ENCODE measurements at regions of chr1 and their contacts with region 1.

Region 1: DNA sequence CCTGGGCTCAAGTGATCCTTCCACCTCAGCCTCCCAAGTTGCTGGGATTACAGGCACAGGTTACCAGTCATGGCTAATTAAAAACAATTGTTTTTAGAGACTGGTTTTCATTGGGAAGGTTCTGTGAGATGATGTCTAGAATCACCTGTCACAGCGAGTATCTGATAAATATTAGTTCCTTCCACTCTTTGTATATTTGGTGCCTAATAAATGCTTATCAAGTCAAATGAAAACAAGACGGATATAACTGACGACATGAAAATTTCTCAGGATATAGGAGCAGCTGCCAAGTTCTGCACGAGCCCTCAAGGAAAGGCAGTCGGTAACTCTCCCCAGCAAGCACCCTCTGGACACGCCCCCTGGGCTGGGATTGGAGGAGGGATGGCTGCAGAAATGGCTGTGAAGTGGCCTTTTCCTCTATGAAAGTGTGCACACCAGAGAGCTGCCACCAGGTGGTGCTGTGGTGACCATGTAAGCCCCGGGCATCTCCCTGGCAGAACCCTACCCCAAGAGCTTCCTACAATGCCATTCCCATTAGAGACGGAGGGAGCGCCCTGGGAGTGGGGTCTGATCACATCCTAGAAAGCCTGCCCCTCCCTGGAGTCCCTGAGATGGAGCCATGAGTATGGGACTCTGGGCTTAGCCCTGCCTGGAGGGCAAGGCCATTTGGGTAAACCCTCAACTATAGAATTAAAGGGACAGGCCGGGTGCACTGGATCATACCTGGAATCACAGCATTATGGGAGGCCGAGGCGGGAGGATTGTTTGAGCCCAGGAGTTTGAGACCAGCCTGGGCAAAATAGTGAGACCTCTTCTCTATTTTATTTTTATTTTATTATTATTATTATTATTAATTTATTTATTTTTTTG is 50.9 kb downstream of the HTR6 start:
- DNase-seq: peak; percentile 93
- H3K4me3 Mint-ChIP-seq: no peak overlapping the region
- H3K27ac Mint-ChIP-seq: no peak overlapping the region
- H3K4me1 Mint-ChIP-seq: peaks cover 28% of the 10 kb centered on the region
- H3K27me3 Mint-ChIP-seq: no peaks in the 10 kb centered on the region

Region 2: DNA sequence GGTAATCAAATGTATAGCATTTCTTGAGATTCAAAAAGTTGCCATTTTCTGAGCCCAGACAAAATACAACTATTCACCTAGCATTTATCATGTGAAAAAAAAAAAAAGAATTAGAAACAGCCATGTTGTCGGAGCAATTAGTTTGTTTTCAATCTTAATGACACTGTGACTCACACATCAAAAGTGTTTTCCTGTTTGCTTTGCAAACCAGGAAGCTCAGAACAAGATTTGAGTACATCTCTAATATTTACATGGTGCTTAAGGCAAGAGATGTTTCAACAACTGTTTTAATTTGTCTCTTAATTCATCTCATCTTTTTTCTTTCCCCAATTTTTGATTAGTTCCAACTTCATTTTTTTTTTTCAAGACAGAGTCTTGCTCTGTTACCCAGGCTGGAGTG is 167.8 kb before region 1 on chr1:
- CTCF ChIA-PET with region 1: interaction called, 12 read pairs
- POLR2A ChIA-PET with region 1: no interaction called
- intact Hi-C with region 1: no loop called
- DNase-seq: no peak
- H3K4me3 Mint-ChIP-seq: no peak overlapping the region
- H3K27ac Mint-ChIP-seq: no peak overlapping the region
- H3K4me1 Mint-ChIP-seq: peaks cover 8% of the 10 kb centered on the region
- H3K27me3 Mint-ChIP-seq: peaks cover 3% of the 10 kb centered on the region

Region 3: GRCh38 chr1:19606817-19607642 is 108.5 kb before region 1 on chr1:
- CTCF ChIA-PET with region 1: no interaction called
- POLR2A ChIA-PET with region 1: no interaction called
- intact Hi-C with region 1: no loop called
- DNase-seq: peak; percentile 69
- H3K4me3 Mint-ChIP-seq: no peak overlapping the region
- H3K27ac Mint-ChIP-seq: peak overlapping the region; percentile 75
- H3K4me1 Mint-ChIP-seq: peaks cover 57% of the 10 kb centered on the region
- H3K27me3 Mint-ChIP-seq: no peaks in the 10 kb centered on the region

Region 4: GRCh38 chr1:19704247-19705113 is 11.1 kb before region 1 on chr1:
- CTCF ChIA-PET with region 1: interaction called, 41 read pairs
- POLR2A ChIA-PET with region 1: interaction called, 3 read pairs
- intact Hi-C with region 1: no loop called
- DNase-seq: peak; percentile 71
- H3K4me3 Mint-ChIP-seq: no peak overlapping the region
- H3K27ac Mint-ChIP-seq: no peak overlapping the region
- H3K4me1 Mint-ChIP-seq: peaks cover 6% of the 10 kb centered on the region
- H3K27me3 Mint-ChIP-seq: no peaks in the 10 kb centered on the region

Region 5: DNA sequence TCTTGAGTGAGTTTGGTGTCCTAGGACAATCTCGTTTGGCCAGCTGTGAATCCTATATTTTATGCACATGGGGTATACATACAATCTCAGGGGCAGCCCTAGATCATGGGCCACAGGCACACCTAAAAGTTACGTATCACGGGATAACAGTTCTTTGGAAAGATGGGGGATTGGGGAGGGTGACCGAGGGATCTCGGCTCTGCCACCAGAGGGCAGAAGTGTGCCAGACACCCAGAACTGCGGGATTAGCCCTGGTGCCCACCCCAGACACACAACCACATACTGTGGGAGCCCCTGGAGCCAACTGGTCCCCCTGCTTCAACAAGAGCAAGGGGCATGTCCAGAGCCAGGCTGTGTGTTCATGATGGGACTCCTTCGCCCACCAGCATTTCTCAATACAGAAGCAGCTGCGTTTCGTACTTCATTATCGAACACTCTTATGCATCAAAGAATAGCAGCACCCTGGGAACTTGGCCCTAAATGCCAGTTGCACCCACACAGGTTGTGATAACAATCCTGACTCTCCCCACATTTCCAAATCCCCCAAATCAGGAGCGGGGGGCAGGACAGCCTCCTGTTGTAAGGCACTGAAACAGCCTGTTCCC is 46.7 kb after region 1 on chr1:
- CTCF ChIA-PET with region 1: interaction called, 6 read pairs
- POLR2A ChIA-PET with region 1: interaction called, 3 read pairs
- intact Hi-C with region 1: loop called (anchors 1 kb)
- DNase-seq: peak; percentile 50
- H3K4me3 Mint-ChIP-seq: no peak overlapping the region
- H3K27ac Mint-ChIP-seq: no peak overlapping the region
- H3K4me1 Mint-ChIP-seq: peaks cover 20% of the 10 kb centered on the region
- H3K27me3 Mint-ChIP-seq: no peaks in the 10 kb centered on the region

Region 6: DNA sequence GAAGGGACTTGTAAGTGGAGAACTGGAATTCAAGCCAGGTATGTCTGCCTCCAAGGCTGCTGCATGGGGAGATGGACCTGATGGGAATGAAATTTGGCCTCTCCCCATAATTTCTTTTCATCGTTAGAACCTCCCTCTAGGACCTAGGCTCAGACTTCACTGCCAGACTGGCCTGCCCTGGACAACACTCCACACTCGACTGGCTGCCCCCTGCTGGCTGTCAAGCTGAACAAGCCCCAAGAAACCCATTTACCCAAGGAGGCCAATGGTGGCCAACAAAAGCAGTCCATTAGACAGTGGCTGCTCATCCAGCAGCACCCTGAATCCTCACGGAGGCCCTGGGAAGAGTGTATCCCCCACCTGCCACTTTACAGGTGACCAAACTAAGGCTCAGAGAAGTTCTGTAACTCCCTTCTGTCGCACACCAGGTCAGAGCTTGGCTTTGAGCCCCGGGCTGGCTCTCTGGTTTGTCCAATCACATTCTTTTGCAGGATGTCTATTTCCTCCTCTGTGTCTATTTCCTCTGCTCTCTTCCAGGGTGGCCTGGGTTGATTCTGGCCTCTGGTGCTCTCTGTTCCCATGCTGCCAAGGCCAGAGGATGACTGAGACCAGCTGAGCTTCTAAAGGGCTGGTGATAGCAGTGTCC is 95.8 kb after region 1 on chr1:
- CTCF ChIA-PET with region 1: interaction called, 9 read pairs
- POLR2A ChIA-PET with region 1: no interaction called
- intact Hi-C with region 1: loop called (anchors 1 kb)
- DNase-seq: peak; percentile 77
- H3K4me3 Mint-ChIP-seq: no peak overlapping the region
- H3K27ac Mint-ChIP-seq: no peak overlapping the region
- H3K4me1 Mint-ChIP-seq: no peaks in the 10 kb centered on the region
- H3K27me3 Mint-ChIP-seq: no peaks in the 10 kb centered on the region

Region 7: GRCh38 chr1:19882111-19883071 is 166.8 kb after region 1 on chr1 and contains the start of gene OTUD3:
- CTCF ChIA-PET with region 1: interaction called, 3 read pairs
- POLR2A ChIA-PET with region 1: no interaction called
- intact Hi-C with region 1: loop called (anchors 1 kb)
- DNase-seq: peak; percentile 97
- H3K4me3 Mint-ChIP-seq: peak within 1 kb of the TSS; percentile 84
- H3K27ac Mint-ChIP-seq: peak within 1 kb of the TSS; percentile 14
- H3K4me1 Mint-ChIP-seq: peaks cover 37% of the 10 kb centered on the region
- H3K27me3 Mint-ChIP-seq: peaks cover 7% of the 10 kb centered on the region
- total RNA-seq, gene OTUD3: 6.9 to 8.4 TPM